PC-9 (cell line): ENCODE measurements at regions of chr1 and their contacts with region 1.

Region 1: GRCh38 chr1:55007625-55008024 is 8.9 kb downstream of the BSND start:
- DNase-seq: peak; percentile 27 to 56
- H3K4me3 ChIP-seq: no peak overlapping the region
- H3K27ac ChIP-seq: no peak overlapping the region
- H3K4me1 ChIP-seq: peaks cover 9% of the 10 kb centered on the region; the same call in 1 of the 2 replicates
- H3K27me3 ChIP-seq: no peaks in the 10 kb centered on the region
- CTCF ChIP-seq: no peak

Region 2: GRCh38 chr1:54518494-54518893 is 489.1 kb before region 1 on chr1:
- CTCF ChIA-PET with region 1: no interaction called
- POLR2A ChIA-PET with region 1: interaction called, 35 read pairs
- intact Hi-C with region 1: no loop called
- DNase-seq: no peak
- H3K4me3 ChIP-seq: no peak overlapping the region
- H3K27ac ChIP-seq: no peak overlapping the region
- H3K4me1 ChIP-seq: no peaks in the 10 kb centered on the region
- H3K27me3 ChIP-seq: no peaks in the 10 kb centered on the region
- CTCF ChIP-seq: no peak

Region 3: DNA sequence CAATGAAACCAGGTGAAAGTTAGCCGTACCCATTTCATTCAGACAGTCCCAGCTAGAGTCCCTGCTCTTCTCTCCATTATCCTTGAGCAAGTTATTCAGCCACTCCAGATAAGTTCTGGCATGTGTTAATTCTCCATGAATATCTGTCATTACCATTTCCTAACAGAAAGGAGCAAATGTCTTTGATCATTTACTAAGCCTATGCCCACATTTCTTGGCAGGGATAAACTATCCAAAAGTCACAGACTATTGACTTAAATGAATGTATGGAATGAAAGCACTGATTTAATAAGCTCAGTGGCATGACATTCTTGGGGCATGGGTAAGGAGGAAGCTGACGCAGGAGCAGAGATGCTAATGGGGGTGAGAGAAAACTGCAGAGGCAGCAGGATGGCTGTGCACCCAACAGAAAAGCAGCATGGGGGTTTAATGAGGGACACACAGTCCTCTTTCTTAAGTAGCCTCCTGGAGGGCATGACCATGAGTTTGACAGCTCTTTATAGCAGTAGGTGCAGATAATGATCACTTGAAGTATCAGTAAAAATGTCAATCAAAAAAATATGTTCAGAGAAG is 103.1 kb before region 1 on chr1:
- CTCF ChIA-PET with region 1: no interaction called
- POLR2A ChIA-PET with region 1: no interaction called
- intact Hi-C with region 1: no loop called
- DNase-seq: peak; percentile 8 to 95
- H3K4me3 ChIP-seq: no peak overlapping the region
- H3K27ac ChIP-seq: peak overlapping the region; percentile 61
- H3K4me1 ChIP-seq: peaks cover 20% of the 10 kb centered on the region
- H3K27me3 ChIP-seq: no peaks in the 10 kb centered on the region
- CTCF ChIP-seq: no peak